Activated T-helper 1 cell treated with anti-CD3 and anti-CD28 coated beads, Interleukin-12 subunit alpha, Interleukin-12 subunit beta, Interleukin-2, Interleukin-4 antibody, amounts not matched to agents 30 ng/mL and 10 ng/mL and 1 ng/mL, durations not matched to agents 14 hours and 24 hours and 36 hours (primary cell): ENCODE measurements at regions of chr9 and their contacts with region 1.

Region 1: DNA sequence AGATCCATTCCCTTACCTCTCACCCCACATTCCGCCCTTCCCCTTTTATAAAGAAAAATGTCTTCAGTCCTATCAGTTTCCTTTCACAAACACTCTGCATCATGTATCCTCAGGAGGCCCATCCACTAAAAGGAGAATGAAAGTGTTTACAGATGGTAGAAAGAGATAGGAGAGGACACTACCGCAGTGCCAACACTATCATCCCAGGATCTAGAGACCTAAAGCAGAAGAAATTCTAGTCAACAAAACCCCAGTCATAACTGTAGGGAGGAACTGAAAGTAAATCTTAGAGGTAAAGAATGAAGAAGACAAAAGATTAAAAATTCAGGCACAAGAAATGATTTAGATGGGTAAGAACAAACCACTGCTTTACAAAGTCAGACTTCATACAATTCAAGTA is 114.1 kb downstream of the MLLT3 start:
- DNase-seq: peak; percentile 30
- H3K4me3 Mint-ChIP-seq: peak overlapping the region; percentile 13
- H3K27ac Mint-ChIP-seq: peak overlapping the region; percentile 5
- H3K4me1 Mint-ChIP-seq: peaks cover 77% of the 10 kb centered on the region
- H3K27me3 Mint-ChIP-seq: no peaks in the 10 kb centered on the region

Region 2: GRCh38 chr9:20315677-20316076 is 192.6 kb before region 1 on chr9:
- intact Hi-C with region 1: no loop called
- DNase-seq: no peak
- H3K4me3 Mint-ChIP-seq: peak overlapping the region; percentile 63
- H3K27ac Mint-ChIP-seq: peak overlapping the region; percentile 96
- H3K4me1 Mint-ChIP-seq: peaks cover 77% of the 10 kb centered on the region
- H3K27me3 Mint-ChIP-seq: no peaks in the 10 kb centered on the region

Region 3: GRCh38 chr9:20361656-20362570 is 146.3 kb before region 1 on chr9:
- intact Hi-C with region 1: no loop called
- DNase-seq: no peak
- H3K4me3 Mint-ChIP-seq: peak overlapping the region; percentile 38
- H3K27ac Mint-ChIP-seq: peak overlapping the region; percentile 83
- H3K4me1 Mint-ChIP-seq: peaks cover 65% of the 10 kb centered on the region
- H3K27me3 Mint-ChIP-seq: no peaks in the 10 kb centered on the region

Region 4: GRCh38 chr9:20437476-20437875 is 70.8 kb before region 1 on chr9:
- intact Hi-C with region 1: loop called (anchors 5 kb)
- DNase-seq: no peak
- H3K4me3 Mint-ChIP-seq: no peak overlapping the region
- H3K27ac Mint-ChIP-seq: no peak overlapping the region
- H3K4me1 Mint-ChIP-seq: peaks cover 30% of the 10 kb centered on the region
- H3K27me3 Mint-ChIP-seq: no peaks in the 10 kb centered on the region

Region 5: DNA sequence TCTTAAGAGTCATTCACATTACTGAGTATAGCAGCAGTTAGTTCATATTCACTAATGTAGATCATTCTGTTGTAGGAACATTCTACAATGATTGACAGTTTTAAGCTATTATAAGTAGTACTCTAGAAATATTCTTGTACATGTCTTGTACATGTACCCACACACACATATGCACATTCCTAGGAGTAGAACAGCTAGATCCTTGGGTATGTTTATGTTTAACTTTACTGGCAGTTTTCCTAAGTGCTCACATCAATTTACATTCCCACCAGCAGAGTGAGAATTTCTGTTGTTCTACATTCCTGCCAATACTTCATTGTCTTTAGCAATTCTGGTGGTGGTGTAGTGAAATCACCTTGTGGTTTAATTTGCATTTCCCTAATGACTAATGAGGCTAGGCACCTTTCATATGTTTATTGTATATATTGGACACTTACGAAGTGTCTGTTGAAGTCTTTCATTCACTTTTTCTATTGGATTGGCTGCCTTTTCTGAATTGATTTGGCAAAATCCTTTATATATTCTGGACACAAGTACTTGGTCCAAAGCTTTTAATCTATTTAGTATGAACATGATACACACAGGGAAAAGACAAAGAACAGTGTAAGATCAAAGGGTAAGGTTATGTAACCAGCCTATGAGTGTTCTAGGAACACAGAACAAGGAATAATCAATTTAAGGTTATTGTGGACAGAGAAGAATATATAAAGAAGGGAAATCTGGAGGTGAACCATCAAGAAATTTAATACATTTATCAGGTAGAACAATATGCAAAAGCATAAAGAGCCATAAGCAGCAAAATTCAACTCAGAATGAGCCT is 18.5 kb after region 1 on chr9:
- intact Hi-C with region 1: loop called (anchors 2 kb)
- DNase-seq: no peak
- H3K4me3 Mint-ChIP-seq: no peak overlapping the region
- H3K27ac Mint-ChIP-seq: no peak overlapping the region
- H3K4me1 Mint-ChIP-seq: peaks cover 85% of the 10 kb centered on the region
- H3K27me3 Mint-ChIP-seq: no peaks in the 10 kb centered on the region

Region 6: GRCh38 chr9:20604562-20604961 is 96.3 kb after region 1 on chr9:
- intact Hi-C with region 1: loop called (anchors 2 kb)
- DNase-seq: no peak
- H3K4me3 Mint-ChIP-seq: peak overlapping the region; percentile 67
- H3K27ac Mint-ChIP-seq: peak overlapping the region; percentile 49
- H3K4me1 Mint-ChIP-seq: peaks cover 71% of the 10 kb centered on the region
- H3K27me3 Mint-ChIP-seq: no peaks in the 10 kb centered on the region